RWPE1 (cell line): ENCODE measurements at regions of chr17 and their contacts with region 1.

Region 1: DNA sequence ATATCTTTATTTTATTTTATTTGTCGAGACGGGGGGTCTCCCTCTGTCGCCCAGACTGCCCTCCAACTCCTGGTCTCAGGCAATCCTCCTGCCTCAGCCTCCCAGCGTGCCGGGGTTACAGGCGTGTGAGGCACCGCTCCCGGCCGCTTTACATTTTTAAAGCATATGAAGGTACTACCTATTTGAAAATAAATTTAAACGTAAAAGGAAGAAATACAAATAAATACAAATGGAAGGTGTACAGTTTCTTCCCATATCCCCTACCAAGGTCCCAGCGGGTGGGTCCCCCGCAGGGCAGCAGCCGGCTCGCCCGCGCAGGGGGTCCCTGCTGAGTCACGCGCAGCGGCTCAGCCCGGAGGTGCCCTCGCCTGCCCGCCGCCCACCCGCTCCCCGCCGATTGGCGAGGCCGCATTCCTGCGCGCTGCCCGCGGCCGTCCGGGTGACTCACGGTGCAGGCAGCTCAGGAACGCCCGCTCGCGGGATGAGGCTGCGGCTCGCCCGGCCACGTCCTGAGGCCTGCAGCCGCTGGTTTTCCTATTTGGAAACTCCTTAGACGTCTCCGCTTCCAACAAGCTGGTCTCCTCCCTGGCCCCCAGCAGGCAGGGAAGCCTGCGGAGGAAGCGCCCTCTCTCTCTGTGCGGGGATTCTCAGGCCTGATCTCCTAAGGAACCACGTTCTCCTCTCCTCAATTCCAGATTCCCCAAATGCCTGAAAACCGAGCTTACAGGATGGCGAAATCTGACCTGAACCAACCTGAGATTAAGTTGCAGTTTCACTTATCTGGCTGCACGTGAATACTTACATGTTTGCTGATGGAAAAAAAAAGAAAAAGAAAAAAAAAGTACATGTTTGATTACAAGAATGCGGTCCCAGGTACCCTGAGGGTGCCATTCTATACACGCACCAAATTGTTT is 54.9 kb upstream of the MAP3K14 start:
- DNase-seq: peak; percentile 95
- H3K27ac ChIP-seq: peak overlapping the region; percentile 100
- CTCF ChIP-seq: no peak

Region 2: GRCh38 chr17:45293413-45294211 is 78.1 kb before region 1 on chr17:
- CTCF ChIA-PET with region 1: no interaction called
- POLR2A ChIA-PET with region 1: no interaction called
- DNase-seq: peak; percentile 76
- H3K27ac ChIP-seq: peak overlapping the region; percentile 93
- CTCF ChIP-seq: no peak

Region 3: DNA sequence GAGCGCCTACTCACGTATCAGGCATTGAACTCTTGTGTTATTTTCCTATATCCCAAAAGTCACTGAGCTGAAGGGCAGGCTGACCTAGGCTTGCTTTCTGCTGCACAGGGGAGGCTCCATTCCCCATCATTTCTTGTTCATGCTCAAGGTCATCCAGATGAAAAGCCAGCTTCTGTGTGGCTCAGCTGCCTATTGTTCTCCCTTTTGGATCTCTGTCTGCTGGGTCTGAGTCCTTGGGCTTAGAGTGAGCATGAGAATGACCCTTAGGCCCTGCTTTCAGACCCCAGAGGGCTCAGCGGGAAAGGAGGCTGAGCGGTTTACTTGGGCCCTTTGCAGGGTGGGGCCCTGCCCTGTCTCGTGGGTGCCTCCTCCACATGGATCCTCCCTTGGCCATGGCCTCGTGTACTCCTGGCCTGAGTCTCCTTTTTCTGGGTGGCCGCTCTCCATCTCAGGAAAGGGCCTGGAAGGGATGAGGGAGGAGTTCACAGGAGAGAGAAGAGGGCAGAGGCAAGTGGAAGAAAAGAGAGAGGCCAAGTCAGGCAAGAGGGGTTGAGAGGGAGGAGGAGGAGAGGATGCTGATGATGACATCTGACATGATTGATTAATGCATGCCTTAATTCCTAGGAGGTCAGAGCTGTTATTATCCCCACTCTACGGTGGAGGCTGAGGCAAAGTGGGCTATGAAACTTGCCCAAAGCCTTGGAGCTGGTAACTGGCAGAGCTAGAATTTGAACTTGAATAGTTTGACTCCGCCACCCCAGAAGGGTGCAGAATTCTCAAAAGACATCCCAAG is 35.1 kb before region 1 on chr17:
- CTCF ChIA-PET with region 1: no interaction called
- POLR2A ChIA-PET with region 1: interaction called, 10 read pairs
- DNase-seq: no peak
- H3K27ac ChIP-seq: no peak overlapping the region
- CTCF ChIP-seq: no peak

Region 4: DNA sequence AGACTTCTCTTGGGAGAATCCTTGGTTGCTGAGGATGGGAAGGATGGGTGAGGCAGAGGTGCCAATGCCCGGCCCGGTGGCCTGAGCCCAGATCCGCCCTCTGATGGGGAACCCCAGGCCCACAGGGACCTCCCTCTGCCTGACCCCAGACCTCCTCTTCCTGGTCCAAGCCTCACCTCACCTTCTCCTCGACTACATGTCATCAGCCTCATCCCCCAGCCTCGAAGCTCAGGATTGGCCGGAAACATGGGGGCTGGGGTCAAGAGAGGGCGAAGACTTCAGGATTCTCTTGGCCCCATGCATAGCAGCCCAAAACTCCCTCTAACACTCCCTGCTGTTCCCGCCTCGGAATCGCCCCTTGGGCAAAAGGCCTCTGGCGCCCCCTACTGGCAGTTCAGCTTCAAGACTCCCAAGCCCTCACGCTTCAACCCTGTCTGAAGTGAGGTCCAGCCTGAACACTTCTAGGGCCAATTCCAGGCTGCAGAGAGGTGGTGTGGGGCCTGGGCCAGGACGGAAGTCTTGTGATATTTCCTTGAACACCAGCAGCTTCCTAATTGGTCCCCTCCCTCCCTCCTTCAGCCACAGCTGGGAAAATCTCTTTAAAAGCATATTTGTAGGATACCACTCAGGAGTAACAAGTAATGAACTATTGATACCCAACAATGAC is 13.8 kb after region 1 on chr17:
- CTCF ChIA-PET with region 1: interaction called, 10 read pairs
- POLR2A ChIA-PET with region 1: interaction called, 3 read pairs
- DNase-seq: peak; percentile 79
- H3K27ac ChIP-seq: peak overlapping the region; percentile 17
- CTCF ChIP-seq: peak; percentile 97

Region 5: GRCh38 chr17:45425125-45425983 is 53.7 kb after region 1 on chr17:
- CTCF ChIA-PET with region 1: no interaction called
- POLR2A ChIA-PET with region 1: no interaction called
- DNase-seq: peak; percentile 89
- H3K27ac ChIP-seq: peak overlapping the region; percentile 86
- CTCF ChIP-seq: peak; percentile 37; the same call in 1 of the 2 replicates